ENCODE measurements at regions of chr19 and their contacts with region 1.

Region 1: GRCh38 chr19:44002566-44003460 is at the start of gene ZNF230:
- DNase-seq: peak; percentile 89
- ATAC-seq: peak; percentile 98
- H3K4me3 ChIP-seq: peak within 1 kb of the TSS; percentile 81
- H3K27ac ChIP-seq: peak within 1 kb of the TSS; percentile 92
- H3K4me1 ChIP-seq: peaks cover 7% of the 10 kb centered on the region
- H3K27me3 ChIP-seq: no peaks in the 10 kb centered on the region
- CTCF ChIP-seq: no peak
- EP300 ChIP-seq: peak in 1 of 2 experiments; percentile 23; a peak in 1 of 4 replicates
- POLR2A ChIP-seq: peak; percentile 67
- RAD21 ChIP-seq: no peak
- polyA plus RNA-seq, gene ZNF230: 1.8 to 2.5 TPM

Region 2: DNA sequence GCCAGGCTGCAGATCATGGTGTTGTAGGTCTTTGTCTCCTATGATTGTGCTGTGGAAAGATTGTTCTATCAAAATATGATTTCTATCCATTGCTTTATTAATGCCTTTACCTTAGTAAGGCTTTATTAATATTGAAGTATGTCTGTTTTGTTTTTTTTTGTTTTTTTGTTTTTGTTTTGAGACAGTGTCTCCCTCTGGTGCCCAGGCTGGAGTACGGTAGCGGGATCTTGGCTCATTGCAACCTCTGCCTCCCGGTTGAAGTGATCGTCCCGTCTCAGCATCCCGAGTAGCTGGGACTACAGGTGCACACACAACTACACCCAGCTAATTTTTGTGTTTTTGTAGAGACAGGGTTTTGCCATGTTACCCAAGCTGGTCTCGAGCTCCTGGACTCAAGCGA is 279.2 kb before region 1 on chr19:
- CTCF ChIA-PET with region 1: no interaction called
- POLR2A ChIA-PET with region 1: no interaction called
- RAD21 ChIA-PET with region 1: no interaction called
- SMC1A ChIA-PET with region 1: no interaction called
- in situ Hi-C with region 1: no loop called
- intact Hi-C with region 1: no loop called
- DNase-seq: no peak
- ATAC-seq: no peak
- H3K4me3 ChIP-seq: no peak overlapping the region
- H3K27ac ChIP-seq: no peak overlapping the region
- H3K4me1 ChIP-seq: peaks cover 26% of the 10 kb centered on the region
- H3K27me3 ChIP-seq: no peaks in the 10 kb centered on the region
- CTCF ChIP-seq: 0 out of 6 replicates have a peak, but pooled peaks of 2 of the 3 experiments have one; percentile 9 to 24
- EP300 ChIP-seq: no peak
- POLR2A ChIP-seq: no peak
- RAD21 ChIP-seq: no peak; the same call in 1 of the 2 replicates

Region 3: DNA sequence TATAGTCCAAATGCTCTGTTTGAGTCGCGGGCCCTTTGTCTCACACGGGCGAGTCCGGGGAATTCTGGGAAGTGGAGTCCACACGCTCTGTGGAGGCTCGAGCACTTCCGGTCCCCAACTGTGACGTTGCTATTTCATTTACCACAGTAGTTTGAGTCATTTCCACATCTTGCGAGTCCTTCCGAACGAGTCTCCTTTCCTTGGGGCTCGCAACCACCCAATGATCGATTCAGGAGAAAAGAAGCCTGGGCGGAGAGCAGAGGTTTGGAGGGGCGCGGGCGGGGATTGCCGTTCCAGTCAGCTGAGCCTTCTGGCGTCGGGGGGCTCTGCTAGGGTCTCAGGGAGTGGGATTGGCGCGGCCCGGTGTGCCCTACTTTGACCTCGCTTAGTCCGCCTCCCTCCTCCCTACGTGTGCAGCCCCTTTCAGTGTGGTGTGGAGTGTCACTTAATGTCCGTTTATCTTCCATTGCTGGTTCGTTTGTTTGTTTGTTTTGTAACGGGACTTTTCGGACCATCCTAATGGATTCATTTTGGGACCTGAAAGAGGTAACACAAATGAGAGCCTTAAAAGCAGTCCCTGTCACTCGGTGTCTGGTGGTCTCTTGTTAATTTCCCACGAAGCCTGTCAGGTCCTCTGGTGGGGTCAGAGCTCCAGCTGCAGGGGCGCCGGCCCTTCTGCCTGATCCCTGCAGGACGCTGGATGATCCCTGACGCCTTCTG is 22.6 kb after region 1 on chr19 and contains the start of gene ZNF222:
- CTCF ChIA-PET with region 1: interaction called, 4 read pairs
- POLR2A ChIA-PET with region 1: no interaction called
- RAD21 ChIA-PET with region 1: no interaction called
- SMC1A ChIA-PET with region 1: interaction called, 11 read pairs
- in situ Hi-C with region 1: no loop called
- intact Hi-C with region 1: no loop called
- DNase-seq: peak; percentile 68
- ATAC-seq: peak; percentile 100
- H3K4me3 ChIP-seq: peak within 1 kb of the TSS; percentile 77
- H3K27ac ChIP-seq: peak within 1 kb of the TSS; percentile 69
- H3K4me1 ChIP-seq: no peaks in the 10 kb centered on the region
- H3K27me3 ChIP-seq: no peaks in the 10 kb centered on the region
- CTCF ChIP-seq: no peak
- EP300 ChIP-seq: no peak
- POLR2A ChIP-seq: 0 out of 2 replicates have a peak, but pooled peaks have one; percentile 44
- RAD21 ChIP-seq: no peak
- polyA plus RNA-seq, gene ZNF222: 3.3 to 4.7 TPM

Region 4: GRCh38 chr19:44059229-44059628 is 56.4 kb after region 1 on chr19:
- CTCF ChIA-PET with region 1: no interaction called
- POLR2A ChIA-PET with region 1: no interaction called
- RAD21 ChIA-PET with region 1: no interaction called
- SMC1A ChIA-PET with region 1: no interaction called
- in situ Hi-C with region 1: no loop called
- intact Hi-C with region 1: no loop called
- DNase-seq: no peak
- ATAC-seq: no peak; the same call in 2 of the 3 replicates
- H3K4me3 ChIP-seq: no peak overlapping the region
- H3K27ac ChIP-seq: no peak overlapping the region
- H3K4me1 ChIP-seq: no peaks in the 10 kb centered on the region
- H3K27me3 ChIP-seq: no peaks in the 10 kb centered on the region
- CTCF ChIP-seq: no peak
- EP300 ChIP-seq: no peak
- POLR2A ChIP-seq: no peak
- RAD21 ChIP-seq: no peak

Measured in GM12878 (cell line).